Activated B cell treated with CpG ODN at 0.5 μM for 24 hours (primary cell): ENCODE measurements at regions of chr4 and their contacts with region 1.

Region 1: GRCh38 chr4:70734168-70734954 is 12.6 kb downstream of the RUFY3 start:
- DNase-seq: no peak
- ATAC-seq: peak; percentile 96
- H3K4me3 Mint-ChIP-seq: peak overlapping the region; percentile 78
- H3K27ac Mint-ChIP-seq: peak overlapping the region; percentile 85
- H3K4me1 Mint-ChIP-seq: peaks cover 52% of the 10 kb centered on the region
- H3K27me3 Mint-ChIP-seq: no peaks in the 10 kb centered on the region
- CTCF ChIP-seq: no peak

Region 2: GRCh38 chr4:70601422-70602039 is 132.8 kb before region 1 on chr4:
- CTCF ChIA-PET with region 1: no interaction called
- POLR2A ChIA-PET with region 1: no interaction called
- intact Hi-C with region 1: no loop called
- DNase-seq: peak; percentile 45
- ATAC-seq: peak; percentile 84
- H3K4me3 Mint-ChIP-seq: no peak overlapping the region
- H3K27ac Mint-ChIP-seq: no peak overlapping the region
- H3K4me1 Mint-ChIP-seq: no peaks in the 10 kb centered on the region
- H3K27me3 Mint-ChIP-seq: peaks cover 2% of the 10 kb centered on the region
- CTCF ChIP-seq: no peak

Region 3: GRCh38 chr4:70687821-70688794 is 46.3 kb before region 1 on chr4 and contains the start of gene UTP3:
- CTCF ChIA-PET with region 1: interaction called, 8 read pairs
- POLR2A ChIA-PET with region 1: interaction called, 11 read pairs
- intact Hi-C with region 1: loop called (anchors 1 kb)
- DNase-seq: peak; percentile 83
- ATAC-seq: peak; percentile 88
- H3K4me3 Mint-ChIP-seq: peak within 1 kb of the TSS; percentile 99
- H3K27ac Mint-ChIP-seq: peak within 1 kb of the TSS; percentile 100
- H3K4me1 Mint-ChIP-seq: peaks cover 48% of the 10 kb centered on the region
- H3K27me3 Mint-ChIP-seq: no peaks in the 10 kb centered on the region
- CTCF ChIP-seq: peak; percentile 96
- total RNA-seq, gene UTP3: 38.5 and 40.1 TPM in 2 replicates

Region 4: DNA sequence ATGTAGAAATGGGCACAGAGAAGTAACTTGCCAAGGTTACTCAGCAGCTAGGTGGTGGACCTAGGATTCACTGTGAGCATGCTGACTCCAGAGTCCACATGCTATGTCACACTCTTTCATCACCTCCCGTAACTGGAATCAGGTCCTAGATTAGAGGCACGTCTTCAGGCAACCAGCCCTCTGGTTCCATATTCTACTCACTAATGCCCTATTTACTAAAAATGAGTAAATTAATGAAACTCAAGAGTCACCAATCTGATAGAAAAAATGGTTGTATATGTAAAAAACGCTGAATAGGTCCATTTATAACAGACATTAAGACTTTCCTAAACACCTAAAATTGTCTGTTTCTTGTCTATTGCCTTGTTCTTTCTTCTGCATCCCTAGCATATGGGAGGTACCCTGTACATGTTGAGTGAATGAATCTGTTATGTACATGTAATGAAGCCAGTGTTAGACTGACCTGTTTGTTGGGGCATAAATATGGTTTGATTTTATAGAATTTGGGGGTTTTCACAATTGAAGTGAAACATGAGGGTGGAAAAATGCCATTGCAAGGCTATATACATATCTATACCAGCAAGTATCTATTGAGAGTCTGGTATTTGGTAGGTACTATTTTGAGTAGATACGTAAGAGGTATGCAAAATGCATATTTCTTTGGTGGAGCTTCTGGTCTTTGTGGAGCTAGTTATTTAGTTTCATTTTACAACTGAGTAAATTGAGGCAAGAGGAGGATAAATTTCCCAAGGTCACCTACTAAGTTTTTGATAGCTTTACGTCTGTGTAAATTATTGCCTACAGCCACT is 20.1 kb before region 1 on chr4:
- CTCF ChIA-PET with region 1: interaction called, 18 read pairs
- POLR2A ChIA-PET with region 1: interaction called, 49 read pairs
- intact Hi-C with region 1: loop called (anchors 1 kb)
- DNase-seq: no peak
- ATAC-seq: peak; percentile 29
- H3K4me3 Mint-ChIP-seq: peak overlapping the region; percentile 69
- H3K27ac Mint-ChIP-seq: peak overlapping the region; percentile 94
- H3K4me1 Mint-ChIP-seq: peaks cover 60% of the 10 kb centered on the region
- H3K27me3 Mint-ChIP-seq: no peaks in the 10 kb centered on the region
- CTCF ChIP-seq: no peak

Region 5: GRCh38 chr4:70749313-70749712 is 15.0 kb after region 1 on chr4:
- CTCF ChIA-PET with region 1: interaction called, 14 read pairs
- POLR2A ChIA-PET with region 1: interaction called, 21 read pairs
- intact Hi-C with region 1: loop called (anchors 1 kb)
- DNase-seq: no peak
- ATAC-seq: peak; percentile 54
- H3K4me3 Mint-ChIP-seq: no peak overlapping the region
- H3K27ac Mint-ChIP-seq: no peak overlapping the region
- H3K4me1 Mint-ChIP-seq: peaks cover 50% of the 10 kb centered on the region
- H3K27me3 Mint-ChIP-seq: no peaks in the 10 kb centered on the region
- CTCF ChIP-seq: no peak

Region 6: DNA sequence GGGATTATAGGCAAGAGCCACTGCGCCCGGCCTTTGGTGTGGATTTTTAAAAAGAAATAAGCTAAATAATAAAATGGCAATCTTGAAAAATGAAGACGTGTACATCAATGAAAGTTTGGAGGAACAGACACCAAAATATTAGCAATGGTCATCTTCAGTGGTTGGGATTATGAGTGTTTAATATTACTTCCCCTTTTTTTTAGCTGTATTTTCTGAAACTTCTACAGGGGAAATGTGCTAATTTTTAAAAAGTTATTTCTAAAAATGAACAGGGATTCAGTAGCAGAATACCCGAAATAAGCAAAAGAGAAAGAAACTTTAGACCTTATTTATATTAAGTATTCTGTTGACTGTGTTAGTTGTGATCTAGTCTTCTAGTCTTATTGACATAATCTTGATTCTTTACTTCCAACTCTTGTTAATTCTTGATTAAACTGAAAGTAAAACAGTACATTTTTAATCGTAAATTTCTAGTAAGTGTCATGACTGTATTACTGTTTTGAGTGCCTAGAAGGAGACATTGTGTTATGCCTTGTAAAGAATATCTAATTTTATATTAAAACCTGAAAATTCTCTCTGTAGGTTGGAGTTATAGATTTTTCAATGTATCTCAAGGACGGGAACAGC is 38.7 kb after region 1 on chr4:
- CTCF ChIA-PET with region 1: interaction called, 17 read pairs
- POLR2A ChIA-PET with region 1: interaction called, 6 read pairs
- intact Hi-C with region 1: loop called (anchors 5 kb)
- DNase-seq: no peak
- ATAC-seq: no peak
- H3K4me3 Mint-ChIP-seq: no peak overlapping the region
- H3K27ac Mint-ChIP-seq: no peak overlapping the region
- H3K4me1 Mint-ChIP-seq: peaks cover 8% of the 10 kb centered on the region
- H3K27me3 Mint-ChIP-seq: no peaks in the 10 kb centered on the region
- CTCF ChIP-seq: no peak

Region 7: DNA sequence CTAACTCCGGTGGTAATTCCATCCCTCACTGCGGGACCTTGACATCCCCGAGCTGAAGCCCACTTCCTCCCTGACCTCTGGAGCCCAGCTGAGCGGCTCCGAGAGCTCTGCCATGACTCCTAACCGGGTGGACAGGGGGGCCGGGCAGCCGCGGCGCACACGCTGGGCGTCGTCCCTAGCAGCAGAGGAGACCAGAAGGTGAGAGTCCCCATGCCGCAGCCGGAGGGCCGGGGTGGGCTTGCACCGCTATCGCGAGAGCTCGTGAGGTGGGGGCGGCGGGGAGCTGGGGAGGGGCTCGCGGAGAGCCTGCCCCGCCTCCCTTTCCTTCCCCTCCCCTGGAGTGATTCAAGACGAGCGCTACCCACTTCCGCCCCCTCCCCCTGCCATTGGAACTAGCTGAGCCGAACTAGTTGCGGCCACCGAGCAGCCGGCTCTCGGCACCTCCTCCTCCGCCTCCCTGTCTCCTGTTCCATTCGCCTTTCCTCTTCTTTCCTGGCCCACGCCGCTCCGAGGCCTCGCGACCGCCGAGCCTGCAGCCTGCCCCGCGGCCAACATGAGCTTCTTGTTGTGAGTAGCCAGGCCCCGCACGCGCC is 167.7 kb after region 1 on chr4 and contains the start of gene MOB1B:
- CTCF ChIA-PET with region 1: interaction called, 5 read pairs
- POLR2A ChIA-PET with region 1: interaction called, 8 read pairs
- intact Hi-C with region 1: loop called (anchors 1 kb)
- DNase-seq: peak; percentile 73
- ATAC-seq: peak; percentile 96
- H3K4me3 Mint-ChIP-seq: peak within 1 kb of the TSS; percentile 98
- H3K27ac Mint-ChIP-seq: peak within 1 kb of the TSS; percentile 85
- H3K4me1 Mint-ChIP-seq: peaks cover 26% of the 10 kb centered on the region
- H3K27me3 Mint-ChIP-seq: no peaks in the 10 kb centered on the region
- CTCF ChIP-seq: no peak
- total RNA-seq, gene MOB1B: 22.2 and 23.4 TPM in 2 replicates

Region 8: GRCh38 chr4:70993181-70994068 is 259.1 kb after region 1 on chr4 and contains the start of gene DCK:
- CTCF ChIA-PET with region 1: interaction called, 8 read pairs
- POLR2A ChIA-PET with region 1: interaction called, 16 read pairs
- intact Hi-C with region 1: no loop called
- DNase-seq: peak; percentile 91
- ATAC-seq: peak; percentile 81
- H3K4me3 Mint-ChIP-seq: peak within 1 kb of the TSS; percentile 94
- H3K27ac Mint-ChIP-seq: peak within 1 kb of the TSS; percentile 94
- H3K4me1 Mint-ChIP-seq: peaks cover 55% of the 10 kb centered on the region
- H3K27me3 Mint-ChIP-seq: no peaks in the 10 kb centered on the region
- CTCF ChIP-seq: no peak
- total RNA-seq, gene DCK: 32.6 and 34.3 TPM in 2 replicates